PC-3 (cell line): ENCODE measurements at regions of chr12 and their contacts with region 1.

Region 1: GRCh38 chr12:89949457-89950195 is 241.0 kb upstream of the ATP2B1 start:
- DNase-seq: peak; percentile 94
- ATAC-seq: peak; percentile 63
- H3K4me3 ChIP-seq: peak overlapping the region; percentile 27; the same call in 1 of the 2 replicates
- H3K27ac ChIP-seq: peak overlapping the region; percentile 96
- H3K4me1 ChIP-seq: peaks cover 58% of the 10 kb centered on the region
- H3K27me3 ChIP-seq: no peaks in the 10 kb centered on the region
- CTCF ChIP-seq: peak; percentile 60

Region 2: GRCh38 chr12:89709157-89709994 is 240.2 kb before region 1 on chr12:
- CTCF ChIA-PET with region 1: interaction called, 3 read pairs
- POLR2A ChIA-PET with region 1: interaction called, 6 read pairs
- intact Hi-C with region 1: loop called (anchors 1 kb)
- DNase-seq: peak; percentile 96
- ATAC-seq: peak; percentile 70
- H3K4me3 ChIP-seq: peak overlapping the region; percentile 90
- H3K27ac ChIP-seq: peak overlapping the region; percentile 87
- H3K4me1 ChIP-seq: peaks cover 39% of the 10 kb centered on the region
- H3K27me3 ChIP-seq: no peaks in the 10 kb centered on the region
- CTCF ChIP-seq: no peak

Region 3: GRCh38 chr12:89768586-89769486 is 180.8 kb before region 1 on chr12:
- CTCF ChIA-PET with region 1: no interaction called
- POLR2A ChIA-PET with region 1: no interaction called
- intact Hi-C with region 1: loop called (anchors 2 kb)
- DNase-seq: peak; percentile 98
- ATAC-seq: peak; percentile 95
- H3K4me3 ChIP-seq: no peak overlapping the region
- H3K27ac ChIP-seq: peak overlapping the region; percentile 93
- H3K4me1 ChIP-seq: peaks cover 22% of the 10 kb centered on the region
- H3K27me3 ChIP-seq: no peaks in the 10 kb centered on the region
- CTCF ChIP-seq: no peak

Region 4: GRCh38 chr12:89825591-89826449 is 123.8 kb before region 1 on chr12:
- CTCF ChIA-PET with region 1: no interaction called
- POLR2A ChIA-PET with region 1: no interaction called
- intact Hi-C with region 1: loop called (anchors 2 kb)
- DNase-seq: peak; percentile 90
- ATAC-seq: peak; percentile 86
- H3K4me3 ChIP-seq: peak overlapping the region; percentile 13; the same call in 1 of the 2 replicates
- H3K27ac ChIP-seq: peak overlapping the region; percentile 72
- H3K4me1 ChIP-seq: peaks cover 23% of the 10 kb centered on the region
- H3K27me3 ChIP-seq: no peaks in the 10 kb centered on the region
- CTCF ChIP-seq: no peak

Region 5: DNA sequence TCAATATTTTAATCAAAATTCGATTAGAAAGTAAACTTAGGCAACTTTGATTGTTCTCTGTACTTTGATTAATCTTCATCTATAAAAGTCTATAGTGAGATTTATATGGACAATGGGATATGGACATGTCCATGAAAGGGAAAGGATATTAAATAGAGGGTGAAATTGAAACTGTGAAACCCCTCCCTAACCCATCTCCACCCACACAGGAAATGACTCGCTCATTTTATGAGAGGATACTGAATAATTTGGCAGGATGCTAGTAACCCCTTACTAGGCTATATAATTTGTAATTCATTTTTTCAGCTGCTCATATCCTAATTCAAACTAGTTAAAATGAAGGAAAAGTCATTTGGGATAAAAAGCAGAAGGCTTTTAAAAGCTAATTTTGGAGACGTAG is 87.0 kb after region 1 on chr12:
- CTCF ChIA-PET with region 1: no interaction called
- POLR2A ChIA-PET with region 1: no interaction called
- intact Hi-C with region 1: loop called (anchors 5 kb)
- DNase-seq: peak; percentile 81
- ATAC-seq: peak; percentile 92
- H3K4me3 ChIP-seq: no peak overlapping the region
- H3K27ac ChIP-seq: peak overlapping the region; percentile 71
- H3K4me1 ChIP-seq: peaks cover 22% of the 10 kb centered on the region
- H3K27me3 ChIP-seq: no peaks in the 10 kb centered on the region
- CTCF ChIP-seq: no peak

Region 6: DNA sequence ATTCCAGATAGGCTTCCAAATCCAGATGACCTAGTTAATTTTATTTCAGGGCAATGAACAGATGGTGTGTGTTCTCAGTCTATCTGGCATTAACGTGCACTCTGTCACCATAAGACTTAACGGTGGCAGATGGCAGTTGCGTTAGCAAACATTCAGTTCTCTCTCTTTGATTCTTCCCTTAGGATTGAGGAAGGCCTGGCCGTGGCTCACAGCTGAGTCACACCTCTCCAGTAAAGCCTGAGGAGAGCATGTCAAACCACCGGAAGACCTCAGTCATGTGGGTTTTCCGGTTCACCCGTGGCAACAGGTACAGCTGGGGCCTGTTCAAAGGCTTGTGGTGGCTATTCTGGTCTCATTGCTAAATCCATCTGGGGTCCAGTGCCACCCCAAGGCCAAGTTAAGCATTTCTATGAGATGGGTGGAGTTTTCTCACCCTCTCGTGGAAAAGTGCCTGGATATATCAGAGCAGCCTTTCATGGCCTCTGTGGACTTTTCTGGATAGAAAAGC is 304.1 kb after region 1 on chr12:
- CTCF ChIA-PET with region 1: no interaction called
- POLR2A ChIA-PET with region 1: no interaction called
- intact Hi-C with region 1: loop called (anchors 1 kb)
- DNase-seq: peak; percentile 98
- ATAC-seq: peak; percentile 100
- H3K4me3 ChIP-seq: no peak overlapping the region
- H3K27ac ChIP-seq: peak overlapping the region; percentile 68
- H3K4me1 ChIP-seq: peaks cover 26% of the 10 kb centered on the region
- H3K27me3 ChIP-seq: no peaks in the 10 kb centered on the region
- CTCF ChIP-seq: peak; percentile 74